ENCODE measurements at regions of chr1 and their contacts with region 1.

Region 1: DNA sequence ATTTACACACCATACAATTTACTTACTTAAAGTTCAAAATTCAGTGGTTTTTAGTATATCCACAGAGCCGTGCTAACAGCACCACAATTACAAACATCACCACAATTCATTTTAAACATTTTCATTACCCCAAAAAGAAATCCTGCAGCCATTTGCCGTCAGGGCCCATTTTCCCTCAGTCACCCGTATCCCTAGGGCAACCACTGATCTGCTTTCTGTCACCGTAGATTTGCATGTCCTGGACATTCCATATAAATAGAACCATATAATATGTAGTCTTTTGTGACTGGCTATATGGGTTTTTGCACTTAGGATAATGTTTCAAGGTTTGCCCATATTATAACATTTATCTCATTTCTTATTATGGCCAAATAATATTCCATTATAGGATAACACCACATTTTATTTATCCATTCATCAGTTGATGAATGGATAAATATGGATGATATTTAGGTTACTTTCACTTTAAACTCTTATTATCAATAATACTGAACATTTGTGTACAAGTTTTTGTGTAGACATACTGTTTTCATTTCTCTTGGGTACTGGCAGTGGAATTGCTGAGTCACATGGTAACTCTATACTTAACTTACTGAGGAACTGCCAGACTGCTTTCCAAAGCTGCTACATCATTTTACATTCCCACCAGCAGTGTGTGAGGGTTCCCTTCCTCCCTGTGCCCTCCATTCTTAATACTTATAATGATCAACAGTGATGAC is 68.9 kb downstream of the ST3GAL3 start:
- DNase-seq: peak in 2 of 3 donors; percentile 21 to 26
- H3K4me3 ChIP-seq: no peak overlapping the region
- H3K4me3 Mint-ChIP-seq: no peak overlapping the region
- H3K27ac ChIP-seq: no peak overlapping the region
- H3K27ac Mint-ChIP-seq: peak overlapping the region in 5 of 7 donors; percentile 11 to 84 (median 24)
- H3K4me1 ChIP-seq: peaks cover 41 to 61% of the 10 kb centered on the region in 2 donors
- H3K4me1 Mint-ChIP-seq: peaks cover 58% of the 10 kb centered on the region
- H3K27me3 ChIP-seq: no peaks in the 10 kb centered on the region
- H3K27me3 Mint-ChIP-seq: peaks cover 0 to 4% (median 0%) of the 10 kb centered on the region in 3 donors
- CTCF ChIP-seq: no peak

Region 2: DNA sequence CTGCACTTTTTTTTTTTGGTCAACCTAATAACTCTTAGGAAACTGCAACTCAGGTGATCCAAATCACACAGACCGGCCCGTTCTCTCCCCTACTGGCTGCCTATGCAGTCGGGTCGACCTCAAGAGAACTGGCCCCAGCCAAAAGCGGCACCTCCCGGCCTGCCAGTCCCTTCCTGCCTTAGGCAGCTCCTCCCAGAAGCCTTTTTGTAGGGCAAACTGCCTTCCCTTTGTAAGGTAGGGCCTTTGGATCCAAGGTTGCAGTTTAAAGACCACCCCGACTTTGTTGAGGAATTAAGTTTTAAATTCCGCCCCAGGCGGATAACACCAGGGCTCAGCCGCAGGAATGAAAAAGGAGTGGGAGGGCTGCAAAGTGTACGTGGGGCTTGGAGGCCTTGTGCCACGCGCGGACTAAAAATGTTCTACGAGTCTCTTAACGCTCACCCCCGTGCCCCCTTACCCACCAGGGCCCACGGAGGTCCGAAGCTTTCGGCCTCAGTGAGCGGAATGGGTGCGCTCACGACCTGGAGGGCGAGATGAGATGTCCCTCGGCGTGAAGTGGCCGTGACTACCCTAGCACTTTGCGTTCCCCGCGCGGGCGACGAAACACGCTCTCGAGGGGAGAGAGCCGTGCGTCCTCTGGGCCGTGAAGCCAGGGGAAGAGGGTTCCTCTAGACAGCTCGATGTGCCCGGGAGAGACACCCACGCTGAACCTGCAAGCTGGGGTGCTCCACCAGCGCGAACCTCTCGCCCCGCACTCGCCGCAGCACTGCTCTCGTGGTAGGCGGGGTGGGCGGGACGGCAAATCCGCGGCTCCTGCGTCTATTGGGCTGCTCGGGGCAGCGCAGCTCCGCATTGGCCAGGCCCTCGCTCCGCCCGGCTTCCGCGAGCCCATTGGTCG is 69.4 kb before region 1 on chr1:
- intact Hi-C with region 1: no loop called
- DNase-seq: peak; percentile 84 to 87 (median 87)
- H3K4me3 ChIP-seq: peak overlapping the region; percentile 38 to 89 (median 66)
- H3K4me3 Mint-ChIP-seq: peak overlapping the region; percentile 83 to 89
- H3K27ac ChIP-seq: peak overlapping the region in 1 of 2 donors; percentile 80
- H3K27ac Mint-ChIP-seq: peak overlapping the region; percentile 20 to 85 (median 70)
- H3K4me1 ChIP-seq: peaks cover 27 to 37% of the 10 kb centered on the region in 2 donors
- H3K4me1 Mint-ChIP-seq: peaks cover 44% of the 10 kb centered on the region
- H3K27me3 ChIP-seq: no peaks in the 10 kb centered on the region
- H3K27me3 Mint-ChIP-seq: no peaks in the 10 kb centered on the region
- CTCF ChIP-seq: no peak

Region 3: GRCh38 chr1:43879414-43879813 is 103.2 kb after region 1 on chr1:
- intact Hi-C with region 1: loop called in 1 of 2 experiments (anchors 10 kb)
- DNase-seq: no peak
- H3K4me3 ChIP-seq: no peak overlapping the region
- H3K4me3 Mint-ChIP-seq: no peak overlapping the region
- H3K27ac ChIP-seq: no peak overlapping the region
- H3K27ac Mint-ChIP-seq: no peak overlapping the region
- H3K4me1 ChIP-seq: peaks cover 0 to 4% of the 10 kb centered on the region in 2 donors
- H3K4me1 Mint-ChIP-seq: peaks cover 4% of the 10 kb centered on the region
- H3K27me3 ChIP-seq: no peaks in the 10 kb centered on the region
- H3K27me3 Mint-ChIP-seq: peaks cover 0 to 2% (median 2%) of the 10 kb centered on the region in 3 donors
- CTCF ChIP-seq: no peak